Calu3 (cell line): ENCODE measurements at regions of chr2 and their contacts with region 1.

Region 1: GRCh38 chr2:40244675-40245074 is 207.2 kb downstream of the SLC8A1 start:
- DNase-seq: peak; percentile 59
- H3K4me3 Mint-ChIP-seq: no peak overlapping the region
- H3K27ac Mint-ChIP-seq: no peak overlapping the region
- H3K4me1 Mint-ChIP-seq: no peaks in the 10 kb centered on the region
- H3K27me3 Mint-ChIP-seq: no peaks in the 10 kb centered on the region
- CTCF ChIP-seq: peak; percentile 24

Region 2: DNA sequence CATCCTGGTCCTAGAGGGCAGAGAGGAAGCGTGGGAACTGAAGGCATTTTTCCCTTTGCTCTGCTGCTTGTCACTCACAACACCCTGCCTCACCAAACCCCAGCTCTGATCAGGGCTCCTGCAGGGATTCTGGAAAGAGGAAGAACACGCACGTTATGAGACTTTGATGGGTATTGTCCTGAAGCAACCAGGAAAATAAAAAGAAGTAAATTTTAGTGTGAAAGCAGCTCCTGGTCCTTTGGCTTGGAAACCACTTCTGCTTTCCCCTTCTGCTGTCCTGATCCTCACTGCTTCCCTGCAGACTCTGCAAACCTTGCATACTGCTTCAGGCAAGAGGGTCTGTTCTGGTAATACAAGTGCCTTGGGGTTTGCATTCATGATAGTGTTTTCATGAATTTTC is 43.1 kb after region 1 on chr2:
- CTCF ChIA-PET with region 1: no interaction called
- intact Hi-C with region 1: no loop called
- DNase-seq: no peak
- H3K4me3 Mint-ChIP-seq: no peak overlapping the region
- H3K27ac Mint-ChIP-seq: no peak overlapping the region
- H3K4me1 Mint-ChIP-seq: no peaks in the 10 kb centered on the region
- H3K27me3 Mint-ChIP-seq: no peaks in the 10 kb centered on the region
- CTCF ChIP-seq: no peak

Region 3: GRCh38 chr2:40332191-40332826 is 87.6 kb after region 1 on chr2:
- CTCF ChIA-PET with region 1: no interaction called
- intact Hi-C with region 1: no loop called
- DNase-seq: peak; percentile 33
- H3K4me3 Mint-ChIP-seq: no peak overlapping the region
- H3K27ac Mint-ChIP-seq: peak overlapping the region; percentile 61
- H3K4me1 Mint-ChIP-seq: peaks cover 11% of the 10 kb centered on the region
- H3K27me3 Mint-ChIP-seq: no peaks in the 10 kb centered on the region
- CTCF ChIP-seq: no peak

Region 4: DNA sequence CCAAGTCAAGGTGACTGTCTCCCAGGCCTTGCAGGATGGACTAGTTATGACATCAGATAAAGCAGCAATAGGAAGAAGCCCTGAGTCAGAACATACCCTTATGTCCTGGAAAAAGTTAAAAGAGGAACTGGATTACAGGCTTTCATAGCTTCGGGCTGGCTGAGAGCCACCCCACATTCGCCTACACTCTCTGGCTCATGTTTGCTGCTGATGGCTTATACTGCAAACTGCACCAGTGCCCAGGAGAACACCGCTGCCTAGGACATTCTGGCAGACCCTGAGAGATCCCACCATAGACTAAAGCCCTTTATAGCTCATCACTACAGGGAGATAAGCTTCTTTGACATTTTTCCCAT is 186.9 kb after region 1 on chr2:
- CTCF ChIA-PET with region 1: no interaction called
- intact Hi-C with region 1: loop called (anchors 10 kb)
- DNase-seq: no peak
- H3K4me3 Mint-ChIP-seq: no peak overlapping the region
- H3K27ac Mint-ChIP-seq: no peak overlapping the region
- H3K4me1 Mint-ChIP-seq: peaks cover 14% of the 10 kb centered on the region
- H3K27me3 Mint-ChIP-seq: no peaks in the 10 kb centered on the region
- CTCF ChIP-seq: no peak

Region 5: DNA sequence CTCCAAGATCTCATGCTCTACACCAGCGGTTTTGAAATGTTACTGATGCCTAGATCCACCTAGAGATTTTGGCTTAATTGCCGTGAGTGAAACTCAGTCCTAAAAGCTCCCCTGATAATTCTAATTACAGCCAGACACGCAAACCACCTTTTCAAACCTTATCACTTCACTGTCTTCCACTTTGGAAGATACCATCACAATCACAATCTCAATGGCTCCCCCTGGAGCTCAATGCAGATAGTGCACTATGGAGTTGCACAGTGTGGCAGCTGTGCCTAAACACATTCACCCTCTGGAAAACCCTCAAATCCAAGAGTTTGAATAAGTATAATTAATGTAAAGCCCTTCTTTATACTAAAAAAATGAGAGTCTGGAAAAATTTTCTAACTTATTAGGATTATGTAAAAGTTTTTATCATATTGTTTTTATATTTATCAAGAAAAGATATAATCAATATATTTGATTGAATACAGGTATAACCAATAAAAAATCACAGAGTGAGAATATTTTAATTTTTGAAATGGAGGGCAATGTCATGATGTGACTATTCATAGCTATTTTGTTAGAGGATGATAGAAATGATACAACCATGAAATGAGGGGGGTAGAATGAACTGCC is 310.1 kb after region 1 on chr2:
- CTCF ChIA-PET with region 1: interaction called, 10 read pairs
- intact Hi-C with region 1: loop called (anchors 1 kb)
- DNase-seq: peak; percentile 77
- H3K4me3 Mint-ChIP-seq: no peak overlapping the region
- H3K27ac Mint-ChIP-seq: no peak overlapping the region
- H3K4me1 Mint-ChIP-seq: no peaks in the 10 kb centered on the region
- H3K27me3 Mint-ChIP-seq: no peaks in the 10 kb centered on the region
- CTCF ChIP-seq: peak; percentile 69

Region 6: DNA sequence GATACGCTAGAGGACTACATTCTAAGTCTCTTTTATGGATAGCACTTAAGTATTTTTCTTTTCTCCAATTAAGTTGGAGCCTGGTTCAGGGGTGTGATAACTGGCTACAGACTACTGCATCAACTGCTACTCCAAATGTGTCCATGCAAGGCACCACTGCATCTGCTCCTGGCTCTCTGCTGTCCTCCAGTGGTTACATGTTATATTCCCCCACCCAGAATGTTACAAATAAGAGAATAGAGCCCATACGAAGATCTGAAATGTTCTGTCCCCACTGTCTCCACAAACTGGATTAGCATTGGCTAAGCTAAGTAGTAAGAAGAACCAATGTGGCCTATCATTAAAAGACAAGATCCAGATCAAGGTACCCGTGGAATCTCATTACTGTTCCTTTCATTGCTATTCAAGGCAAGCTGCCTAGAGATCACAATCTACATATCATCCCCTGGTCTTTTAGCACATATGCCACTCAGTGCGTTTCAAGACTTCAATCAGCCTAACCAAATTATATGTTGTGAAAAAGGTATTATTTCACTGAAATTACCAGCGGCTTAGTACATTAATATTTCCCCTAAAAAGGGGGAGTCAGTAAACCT is 515.5 kb after region 1 on chr2:
- CTCF ChIA-PET with region 1: no interaction called
- intact Hi-C with region 1: loop called (anchors 10 kb)
- DNase-seq: peak; percentile 51
- H3K4me3 Mint-ChIP-seq: no peak overlapping the region
- H3K27ac Mint-ChIP-seq: no peak overlapping the region
- H3K4me1 Mint-ChIP-seq: no peaks in the 10 kb centered on the region
- H3K27me3 Mint-ChIP-seq: no peaks in the 10 kb centered on the region
- CTCF ChIP-seq: peak; percentile 70

Region 7: GRCh38 chr2:41782306-41783158 is 1537.9 kb after region 1 on chr2:
- CTCF ChIA-PET with region 1: no interaction called
- intact Hi-C with region 1: loop called (anchors 10 kb)
- DNase-seq: peak; percentile 46
- H3K4me3 Mint-ChIP-seq: no peak overlapping the region
- H3K27ac Mint-ChIP-seq: no peak overlapping the region
- H3K4me1 Mint-ChIP-seq: peaks cover 8% of the 10 kb centered on the region
- H3K27me3 Mint-ChIP-seq: peaks cover 30% of the 10 kb centered on the region
- CTCF ChIP-seq: peak; percentile 46